Vagina (tissue), 2 donors: ENCODE measurements at regions of chr18 and their contacts with region 1.

Region 1: GRCh38 chr18:45106331-45106774 is 425.7 kb downstream of the SETBP1 start:
- DNase-seq: no peak
- H3K4me3 ChIP-seq: no peak overlapping the region
- H3K27ac ChIP-seq: no peak overlapping the region
- H3K4me1 ChIP-seq: peaks cover 4% of the 10 kb centered on the region
- H3K27me3 ChIP-seq: no peaks in the 10 kb centered on the region
- CTCF ChIP-seq: no peak
- POLR2A ChIP-seq: no peak

Region 2: DNA sequence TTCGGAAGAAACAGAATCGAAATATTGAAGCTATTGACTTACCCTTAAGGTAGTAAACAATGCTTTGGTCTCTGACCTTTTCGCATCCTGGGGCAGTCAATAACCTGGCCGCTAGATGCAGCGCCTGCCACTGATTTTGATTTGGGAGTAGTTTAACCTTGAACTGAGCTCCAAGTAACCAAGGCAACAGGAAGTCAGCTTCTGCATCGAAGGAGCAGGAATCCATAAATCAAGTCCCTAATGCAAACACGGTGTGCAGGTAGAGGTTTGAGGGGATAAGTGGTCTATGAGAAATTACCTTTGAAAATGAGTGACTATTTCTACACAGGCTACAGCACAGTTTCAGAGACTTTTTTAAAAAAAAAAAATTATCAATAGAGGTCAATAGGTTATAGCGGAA is 72.2 kb before region 1 on chr18:
- intact Hi-C with region 1: loop called (anchors 2 kb)
- DNase-seq: no peak
- H3K4me3 ChIP-seq: no peak overlapping the region
- H3K27ac ChIP-seq: no peak overlapping the region
- H3K4me1 ChIP-seq: no peaks in the 10 kb centered on the region
- H3K27me3 ChIP-seq: no peaks in the 10 kb centered on the region
- CTCF ChIP-seq: no peak
- POLR2A ChIP-seq: no peak